Breast epithelium (tissue), 4 donors: ENCODE measurements at regions of chr12 and their contacts with region 1.

Region 1: DNA sequence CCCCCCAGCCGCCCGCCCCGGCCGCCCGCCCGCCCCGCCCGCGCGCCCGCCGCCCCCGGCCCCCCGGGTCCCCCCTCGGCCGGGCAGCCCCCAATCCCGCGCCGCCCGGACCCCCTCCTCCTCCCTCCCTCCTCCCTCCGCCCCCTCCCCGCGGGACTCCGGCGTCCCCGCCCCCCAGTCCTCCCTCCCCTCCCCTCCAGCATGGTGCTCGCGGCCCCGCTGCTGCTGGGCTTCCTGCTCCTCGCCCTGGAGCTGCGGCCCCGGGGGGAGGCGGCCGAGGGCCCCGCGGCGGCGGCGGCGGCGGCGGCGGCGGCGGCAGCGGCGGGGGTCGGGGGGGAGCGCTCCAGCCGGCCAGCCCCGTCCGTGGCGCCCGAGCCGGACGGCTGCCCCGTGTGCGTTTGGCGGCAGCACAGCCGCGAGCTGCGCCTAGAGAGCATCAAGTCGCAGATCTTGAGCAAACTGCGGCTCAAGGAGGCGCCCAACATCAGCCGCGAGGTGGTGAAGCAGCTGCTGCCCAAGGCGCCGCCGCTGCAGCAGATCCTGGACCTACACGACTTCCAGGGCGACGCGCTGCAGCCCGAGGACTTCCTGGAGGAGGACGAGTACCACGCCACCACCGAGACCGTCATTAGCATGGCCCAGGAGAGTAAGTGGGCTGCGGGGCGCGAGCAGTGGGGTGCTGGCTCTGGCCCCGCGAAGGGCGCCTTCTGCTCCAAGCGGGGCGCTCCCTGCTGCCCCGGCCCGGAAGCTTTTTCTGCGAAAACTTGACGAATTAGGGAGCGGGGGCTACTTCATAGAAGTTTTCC is at the start of gene GDF11:
- DNase-seq: peak in 1 of 2 donors; percentile 54
- H3K4me3 ChIP-seq: peak within 1 kb of the TSS; percentile 58 to 86 (median 62)
- H3K27ac ChIP-seq: peak within 1 kb of the TSS; percentile 45 to 72
- H3K4me1 ChIP-seq: peaks cover 3 to 4% of the 10 kb centered on the region in 2 donors
- H3K27me3 ChIP-seq: no peaks in the 10 kb centered on the region
- CTCF ChIP-seq: no peak
- POLR2A ChIP-seq: no peak
- total RNA-seq, gene GDF11: 0.64 to 1.6 (median 0.88) TPM

Region 2: DNA sequence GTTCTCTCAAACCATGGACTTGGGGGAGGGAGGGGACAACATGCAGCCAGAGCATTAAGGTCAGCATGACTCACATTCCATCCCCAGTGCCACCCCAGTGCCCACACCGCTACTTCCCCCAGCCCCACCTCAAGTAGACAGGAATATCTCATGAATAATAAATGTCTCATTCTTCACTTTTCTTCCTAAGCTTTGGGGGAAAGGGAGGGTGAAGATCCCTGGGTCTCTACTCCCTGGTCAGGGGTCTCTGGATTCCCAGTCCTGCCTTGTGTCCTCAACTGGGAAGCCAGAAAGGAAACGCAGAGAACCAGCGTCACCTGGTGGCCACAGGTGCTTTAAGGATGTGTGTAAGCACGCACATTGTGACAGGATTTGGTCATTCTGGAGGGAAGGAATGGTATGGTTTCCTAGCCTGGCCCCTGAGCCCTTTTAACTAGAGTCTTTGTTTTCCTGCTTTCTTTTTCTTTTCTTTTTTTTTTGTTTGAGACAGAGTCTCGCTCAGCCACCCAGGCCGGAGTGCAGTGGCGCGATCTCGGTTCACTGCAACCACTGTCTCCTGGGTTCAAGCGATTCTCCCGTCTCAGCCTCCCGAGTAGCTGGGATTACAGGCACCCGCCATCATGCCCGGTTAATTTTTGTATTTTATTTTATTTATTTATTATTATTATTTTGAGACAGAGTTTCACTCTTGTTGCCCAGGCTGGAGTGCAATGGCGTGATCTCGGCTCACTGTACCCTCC is 1382.4 kb before region 1 on chr12:
- intact Hi-C with region 1: loop called (anchors 5 kb)
- DNase-seq: peak; percentile 72 to 76
- H3K4me3 ChIP-seq: no peak overlapping the region
- H3K27ac ChIP-seq: peak overlapping the region; percentile 90 to 93
- H3K4me1 ChIP-seq: no peaks in the 10 kb centered on the region
- H3K27me3 ChIP-seq: no peaks in the 10 kb centered on the region
- CTCF ChIP-seq: peak; percentile 69 to 88 (median 78)
- POLR2A ChIP-seq: no peak

Region 3: GRCh38 chr12:55818886-55819285 is 75.6 kb after region 1 on chr12:
- intact Hi-C with region 1: loop called (anchors 1 kb)
- DNase-seq: no peak
- H3K4me3 ChIP-seq: peak overlapping the region in 2 of 3 donors; percentile 67 to 71
- H3K27ac ChIP-seq: peak overlapping the region; percentile 35 to 93
- H3K4me1 ChIP-seq: peaks cover 0 to 17% of the 10 kb centered on the region in 2 donors
- H3K27me3 ChIP-seq: no peaks in the 10 kb centered on the region
- CTCF ChIP-seq: no peak
- POLR2A ChIP-seq: no peak

Region 4: DNA sequence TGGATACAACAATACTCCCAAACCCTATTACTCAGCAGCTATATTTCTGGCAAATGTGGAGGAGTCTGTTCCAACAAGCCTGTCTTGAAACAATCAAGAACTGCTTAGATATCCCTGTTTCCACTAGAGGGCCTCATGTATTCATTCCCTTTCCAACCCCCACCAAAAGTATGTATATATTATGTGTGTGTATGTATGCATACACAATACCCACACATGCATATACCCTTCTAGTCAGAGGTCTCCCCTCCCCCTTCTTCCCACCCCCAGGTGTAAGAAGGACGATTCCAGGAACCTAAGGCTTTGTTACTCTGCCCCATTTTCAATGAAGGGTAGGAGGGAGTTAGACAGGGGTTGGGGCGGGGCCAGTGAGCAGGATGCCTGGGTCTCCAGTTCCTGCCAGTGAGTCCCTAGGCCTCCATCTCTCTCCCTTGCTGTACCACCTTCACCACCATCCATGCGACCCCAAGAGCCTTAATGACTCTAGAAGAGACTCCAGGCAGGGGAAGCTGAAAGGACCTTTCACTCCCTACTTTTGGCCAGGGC is 187.5 kb after region 1 on chr12 and contains the start of gene DGKA:
- intact Hi-C with region 1: loop called (anchors 5 kb)
- DNase-seq: no peak
- H3K4me3 ChIP-seq: peak within 1 kb of the TSS; percentile 66 to 96 (median 79)
- H3K27ac ChIP-seq: peak within 1 kb of the TSS; percentile 85 to 89
- H3K4me1 ChIP-seq: peaks cover 4 to 20% of the 10 kb centered on the region in 2 donors
- H3K27me3 ChIP-seq: no peaks in the 10 kb centered on the region
- CTCF ChIP-seq: peak; percentile 23 to 38 (median 31)
- POLR2A ChIP-seq: no peak
- total RNA-seq, gene DGKA: 25.1 to 50.5 (median 44.2) TPM